ENCODE measurements at regions of chr9 and their contacts with region 1.

Region 1: DNA sequence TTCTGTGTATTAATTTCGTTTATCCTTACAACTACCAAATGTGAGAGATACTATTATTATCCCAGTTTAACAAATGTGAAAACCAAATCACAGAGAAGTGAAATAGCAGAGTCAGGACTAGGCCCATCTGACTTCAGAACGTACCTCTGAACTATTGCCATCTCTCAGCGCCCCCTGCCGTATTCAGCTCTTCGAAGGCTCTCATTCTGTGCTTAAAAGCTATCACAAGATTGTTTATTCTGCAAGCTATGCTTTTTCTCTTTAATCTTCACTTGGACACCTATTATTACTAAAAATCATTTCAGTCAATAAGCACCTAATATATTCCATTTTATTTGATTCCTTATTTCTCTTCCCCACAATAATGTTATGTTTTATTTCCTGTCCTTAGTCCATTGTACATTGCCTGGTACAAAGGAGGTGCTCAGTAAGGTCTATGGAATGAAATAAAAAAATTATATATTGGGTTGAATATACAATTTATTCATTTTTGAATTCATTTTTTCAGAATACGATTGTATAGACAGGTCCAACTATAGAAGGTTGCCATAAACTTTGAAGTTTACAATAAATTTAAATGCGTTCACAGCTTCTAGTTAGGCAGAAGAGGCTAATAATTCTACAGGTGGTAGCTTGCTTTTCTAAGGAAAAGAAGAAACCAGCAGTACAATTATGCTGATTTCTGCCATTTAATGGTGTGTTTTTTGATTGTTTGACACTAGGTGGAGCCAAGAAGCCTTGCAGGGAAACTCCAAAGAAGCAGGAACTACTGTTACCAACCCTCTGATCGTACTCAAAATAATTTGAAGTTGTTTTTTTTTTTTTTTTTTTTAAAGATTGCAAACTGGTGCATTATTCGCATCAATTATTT is 202.2 kb upstream of the DMRTA1 start:
- DNase-seq: peak; percentile 58
- H3K4me3 ChIP-seq: peak overlapping the region in 1 of 3 experiments; percentile 19
- H3K27ac ChIP-seq: no peak overlapping the region
- H3K4me1 ChIP-seq: peaks cover 30% of the 10 kb centered on the region
- H3K27me3 ChIP-seq: no peaks in the 10 kb centered on the region
- CTCF ChIP-seq: peak; percentile 59 to 77

Region 2: DNA sequence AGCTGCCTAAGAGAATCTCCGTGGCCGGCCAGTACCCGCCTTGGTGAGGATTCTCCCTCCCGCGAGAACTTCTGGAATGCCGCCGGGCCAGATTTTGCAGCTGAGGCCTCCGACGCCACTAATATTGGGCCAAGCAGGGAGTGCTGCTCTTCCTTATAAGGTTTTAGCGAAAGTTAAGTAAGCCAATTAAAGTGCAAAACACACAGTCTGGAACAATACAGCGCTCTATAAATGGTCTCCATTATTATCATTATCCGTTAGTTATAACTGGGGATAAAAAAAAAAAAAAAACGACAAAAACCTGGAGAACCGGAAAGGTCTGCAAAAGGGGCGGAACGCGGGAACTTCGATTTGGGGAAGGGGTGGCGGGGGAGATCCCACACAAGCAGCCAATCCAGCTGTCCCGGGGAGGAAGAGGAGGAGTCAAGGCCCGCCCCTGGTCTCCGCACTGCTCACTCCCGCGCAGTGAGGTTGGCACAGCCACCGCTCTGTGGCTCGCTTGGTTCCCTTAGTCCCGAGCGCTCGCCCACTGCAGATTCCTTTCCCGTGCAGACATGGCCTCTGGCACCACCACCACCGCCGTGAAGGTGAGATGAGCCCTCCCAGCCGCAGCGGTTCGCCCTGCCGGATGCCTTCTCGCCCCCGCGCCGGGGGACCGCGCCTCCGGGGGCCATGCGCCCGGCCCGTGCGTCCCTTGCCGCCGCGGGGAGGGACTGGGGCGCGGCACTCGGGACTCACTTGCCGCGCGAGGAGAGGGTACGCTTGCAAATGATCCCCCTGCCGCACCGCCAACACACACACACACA is 442.0 kb before region 1 on chr9 and contains the start of gene MTAP:
- CTCF ChIA-PET with region 1: no interaction called
- dilution Hi-C with region 1: loop called (anchors 25 kb)
- in situ Hi-C with region 1: no loop called
- intact Hi-C with region 1: no loop called
- DNase-seq: peak; percentile 89
- H3K4me3 ChIP-seq: peak within 1 kb of the TSS; percentile 67 to 71 (median 68)
- H3K27ac ChIP-seq: peak within 1 kb of the TSS; percentile 86
- H3K4me1 ChIP-seq: peaks cover 31% of the 10 kb centered on the region
- H3K27me3 ChIP-seq: no peaks in the 10 kb centered on the region
- CTCF ChIP-seq: no peak
- total RNA-seq, gene MTAP: 51.5 to 96.9 TPM

Region 3: GRCh38 chr9:22216730-22217160 is 27.6 kb before region 1 on chr9:
- CTCF ChIA-PET with region 1: interaction called, 27 read pairs
- dilution Hi-C with region 1: no loop called
- in situ Hi-C with region 1: no loop called
- intact Hi-C with region 1: no loop called
- DNase-seq: no peak
- H3K4me3 ChIP-seq: no peak overlapping the region
- H3K27ac ChIP-seq: no peak overlapping the region
- H3K4me1 ChIP-seq: peaks cover 18% of the 10 kb centered on the region
- H3K27me3 ChIP-seq: no peaks in the 10 kb centered on the region
- CTCF ChIP-seq: no peak

Region 4: GRCh38 chr9:22452415-22453010 is 208.1 kb after region 1 on chr9:
- CTCF ChIA-PET with region 1: no interaction called
- dilution Hi-C with region 1: no loop called
- in situ Hi-C with region 1: no loop called
- intact Hi-C with region 1: loop called (anchors 1 kb)
- DNase-seq: no peak
- H3K4me3 ChIP-seq: no peak overlapping the region
- H3K27ac ChIP-seq: no peak overlapping the region
- H3K4me1 ChIP-seq: no peaks in the 10 kb centered on the region
- H3K27me3 ChIP-seq: no peaks in the 10 kb centered on the region
- CTCF ChIP-seq: peak; percentile 79 to 91

Measured in mammary epithelial cell (primary cell).